Mammary epithelial cell (primary cell): ENCODE measurements at regions of chr3 and their contacts with region 1.

Region 1: GRCh38 chr3:175193815-175194518 is 334.8 kb downstream of the NAALADL2 start:
- DNase-seq: peak; percentile 83
- H3K4me3 ChIP-seq: no peak overlapping the region
- H3K27ac ChIP-seq: peak overlapping the region; percentile 93
- H3K4me1 ChIP-seq: peaks cover 17% of the 10 kb centered on the region
- H3K27me3 ChIP-seq: no peaks in the 10 kb centered on the region
- CTCF ChIP-seq: no peak

Region 2: GRCh38 chr3:175149675-175150074 is 44.3 kb before region 1 on chr3:
- CTCF ChIA-PET with region 1: no interaction called
- dilution Hi-C with region 1: no loop called
- in situ Hi-C with region 1: no loop called
- intact Hi-C with region 1: loop called (anchors 5 kb)
- DNase-seq: peak; percentile 84
- H3K4me3 ChIP-seq: no peak overlapping the region
- H3K27ac ChIP-seq: no peak overlapping the region
- H3K4me1 ChIP-seq: peaks cover 18% of the 10 kb centered on the region
- H3K27me3 ChIP-seq: no peaks in the 10 kb centered on the region
- CTCF ChIP-seq: no peak